ENCODE measurements at regions of chr1 and their contacts with region 1.

Region 1: GRCh38 chr1:88825721-88826120 is 65.6 kb downstream of the GTF2B start:
- DNase-seq: no peak
- H3K4me3 Mint-ChIP-seq: no peak overlapping the region
- H3K27ac Mint-ChIP-seq: no peak overlapping the region
- H3K4me1 Mint-ChIP-seq: no peaks in the 10 kb centered on the region
- H3K27me3 Mint-ChIP-seq: no peaks in the 10 kb centered on the region

Region 2: GRCh38 chr1:88529581-88529980 is 296.1 kb before region 1 on chr1:
- intact Hi-C with region 1: no loop called
- DNase-seq: no peak
- H3K4me3 Mint-ChIP-seq: no peak overlapping the region
- H3K27ac Mint-ChIP-seq: no peak overlapping the region
- H3K4me1 Mint-ChIP-seq: no peaks in the 10 kb centered on the region
- H3K27me3 Mint-ChIP-seq: peaks cover 7% of the 10 kb centered on the region

Region 3: GRCh38 chr1:88813471-88813870 is 12.2 kb before region 1 on chr1:
- intact Hi-C with region 1: loop called (anchors 2 kb)
- DNase-seq: no peak
- H3K4me3 Mint-ChIP-seq: no peak overlapping the region
- H3K27ac Mint-ChIP-seq: no peak overlapping the region
- H3K4me1 Mint-ChIP-seq: no peaks in the 10 kb centered on the region
- H3K27me3 Mint-ChIP-seq: no peaks in the 10 kb centered on the region

Measured in activated T-helper 1 cell treated with anti-CD3 and anti-CD28 coated beads, Interleukin-12 subunit alpha, Interleukin-12 subunit beta, Interleukin-2, Interleukin-4 antibody, amounts not matched to agents 30 ng/mL and 10 ng/mL and 1 ng/mL, durations not matched to agents 14 hours and 24 hours and 36 hours (primary cell).